Activated naive CD4-positive, alpha-beta T cell treated with anti-CD3 and anti-CD28 coated beads for 36 hours (primary cell): ENCODE measurements at regions of chr3 and their contacts with region 1.

Region 1: DNA sequence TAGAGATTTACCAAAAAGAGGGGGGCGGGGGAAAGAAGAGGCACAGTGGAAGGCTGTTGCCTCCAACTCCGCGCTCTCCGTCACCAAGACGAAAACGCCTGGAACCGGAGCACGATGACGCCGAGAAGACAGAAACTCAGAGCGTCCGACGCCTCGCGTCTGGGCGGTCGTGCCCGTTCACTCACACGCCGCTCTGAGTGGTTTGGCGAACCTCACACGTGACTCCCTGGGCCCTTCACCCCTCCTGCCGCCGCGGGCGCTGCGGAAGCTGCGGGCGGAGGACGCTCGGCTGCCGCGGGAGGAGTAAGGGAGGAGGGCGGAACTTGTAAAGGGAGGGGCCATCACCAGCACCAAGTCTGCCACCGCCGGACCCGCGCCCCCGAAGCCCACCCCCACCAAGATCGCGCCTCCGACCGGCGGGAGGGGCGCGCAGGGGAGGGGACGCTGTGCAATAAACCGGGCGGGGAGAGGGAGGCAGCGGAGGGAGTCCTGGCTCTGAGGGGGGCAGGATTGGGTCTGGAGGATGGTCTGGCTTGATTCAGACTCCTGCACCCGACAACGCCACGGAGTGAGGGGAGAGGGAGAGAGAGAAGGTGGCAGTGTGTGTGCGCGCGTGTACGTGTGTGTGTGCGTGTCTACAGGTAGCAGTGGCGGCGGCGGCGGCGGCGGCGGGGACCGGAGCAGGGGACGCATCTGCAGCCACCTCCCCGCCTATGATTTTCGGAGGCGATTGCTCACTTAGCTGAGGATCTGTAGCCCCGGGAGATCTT is 1.9 kb upstream of the NLGN1 start:
- DNase-seq: peak; percentile 60
- H3K4me3 Mint-ChIP-seq: peak overlapping the region; percentile 66
- H3K27ac Mint-ChIP-seq: no peak overlapping the region
- H3K4me1 Mint-ChIP-seq: peaks cover 30% of the 10 kb centered on the region
- H3K27me3 Mint-ChIP-seq: peaks cover 63% of the 10 kb centered on the region

Region 2: DNA sequence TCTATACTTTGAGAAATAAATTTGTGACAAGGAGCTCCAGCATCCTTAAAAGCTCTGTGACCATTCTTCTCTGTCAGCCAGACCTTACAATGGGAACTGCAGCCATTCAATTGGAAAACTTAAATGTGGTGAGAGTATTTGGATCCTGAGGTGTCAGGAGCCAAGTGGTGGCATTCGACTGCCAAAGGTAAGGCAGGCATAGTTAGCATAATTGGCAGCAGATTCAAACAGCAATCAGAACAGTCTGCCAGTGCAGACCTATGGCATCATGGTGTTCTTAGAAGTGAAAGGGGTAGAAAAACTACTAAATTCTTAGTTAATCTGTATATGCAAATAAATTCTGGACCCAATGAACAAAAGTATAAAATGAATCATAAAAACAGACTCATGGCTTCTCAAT is 1374.4 kb before region 1 on chr3:
- CTCF ChIA-PET with region 1: no interaction called
- intact Hi-C with region 1: no loop called
- DNase-seq: no peak
- H3K4me3 Mint-ChIP-seq: no peak overlapping the region
- H3K27ac Mint-ChIP-seq: no peak overlapping the region
- H3K4me1 Mint-ChIP-seq: no peaks in the 10 kb centered on the region
- H3K27me3 Mint-ChIP-seq: no peaks in the 10 kb centered on the region

Region 3: GRCh38 chr3:173513123-173513522 is 117.5 kb after region 1 on chr3:
- CTCF ChIA-PET with region 1: no interaction called
- intact Hi-C with region 1: loop called (anchors 1 kb)
- DNase-seq: no peak
- H3K4me3 Mint-ChIP-seq: no peak overlapping the region
- H3K27ac Mint-ChIP-seq: no peak overlapping the region
- H3K4me1 Mint-ChIP-seq: no peaks in the 10 kb centered on the region
- H3K27me3 Mint-ChIP-seq: no peaks in the 10 kb centered on the region